ENCODE measurements at regions of chr1 and their contacts with region 1.

Region 1: GRCh38 chr1:211323156-211324063 is 3.2 kb upstream of the TRAF5 start:
- DNase-seq: peak; percentile 77
- H3K4me3 Mint-ChIP-seq: no peak overlapping the region
- H3K27ac Mint-ChIP-seq: no peak overlapping the region
- H3K4me1 Mint-ChIP-seq: peaks cover 52% of the 10 kb centered on the region
- H3K27me3 Mint-ChIP-seq: no peaks in the 10 kb centered on the region

Region 2: DNA sequence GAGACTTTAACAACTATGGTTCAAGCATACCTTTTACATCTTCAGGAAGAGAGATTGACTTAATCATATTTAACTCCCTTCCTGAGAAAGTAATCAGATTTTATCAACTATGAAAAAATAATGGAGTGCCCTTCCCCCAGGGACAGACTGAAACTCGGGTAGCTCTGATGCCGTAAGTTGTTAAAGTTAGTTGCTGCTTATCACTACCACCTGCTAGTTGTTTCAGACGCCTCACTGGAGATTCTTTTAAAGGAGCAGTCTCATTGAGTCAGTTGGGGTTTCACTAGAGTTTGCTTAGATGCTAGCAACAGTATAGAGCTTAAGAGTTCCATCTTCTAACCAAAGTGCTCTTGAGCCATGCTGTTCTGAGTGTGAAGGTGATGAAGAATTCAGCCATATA is 13.8 kb before region 1 on chr1:
- CTCF ChIA-PET with region 1: interaction called, 10 read pairs
- POLR2A ChIA-PET with region 1: interaction called, 3 read pairs
- DNase-seq: no peak
- H3K4me3 Mint-ChIP-seq: no peak overlapping the region
- H3K27ac Mint-ChIP-seq: no peak overlapping the region
- H3K4me1 Mint-ChIP-seq: peaks cover 14% of the 10 kb centered on the region
- H3K27me3 Mint-ChIP-seq: no peaks in the 10 kb centered on the region

Region 3: GRCh38 chr1:211335522-211336157 is 12.2 kb after region 1 on chr1:
- CTCF ChIA-PET with region 1: interaction called, 22 read pairs
- POLR2A ChIA-PET with region 1: interaction called, 60 read pairs
- DNase-seq: peak; percentile 45
- H3K4me3 Mint-ChIP-seq: peak overlapping the region; percentile 58
- H3K27ac Mint-ChIP-seq: peak overlapping the region; percentile 85
- H3K4me1 Mint-ChIP-seq: peaks cover 86% of the 10 kb centered on the region
- H3K27me3 Mint-ChIP-seq: no peaks in the 10 kb centered on the region

Region 4: DNA sequence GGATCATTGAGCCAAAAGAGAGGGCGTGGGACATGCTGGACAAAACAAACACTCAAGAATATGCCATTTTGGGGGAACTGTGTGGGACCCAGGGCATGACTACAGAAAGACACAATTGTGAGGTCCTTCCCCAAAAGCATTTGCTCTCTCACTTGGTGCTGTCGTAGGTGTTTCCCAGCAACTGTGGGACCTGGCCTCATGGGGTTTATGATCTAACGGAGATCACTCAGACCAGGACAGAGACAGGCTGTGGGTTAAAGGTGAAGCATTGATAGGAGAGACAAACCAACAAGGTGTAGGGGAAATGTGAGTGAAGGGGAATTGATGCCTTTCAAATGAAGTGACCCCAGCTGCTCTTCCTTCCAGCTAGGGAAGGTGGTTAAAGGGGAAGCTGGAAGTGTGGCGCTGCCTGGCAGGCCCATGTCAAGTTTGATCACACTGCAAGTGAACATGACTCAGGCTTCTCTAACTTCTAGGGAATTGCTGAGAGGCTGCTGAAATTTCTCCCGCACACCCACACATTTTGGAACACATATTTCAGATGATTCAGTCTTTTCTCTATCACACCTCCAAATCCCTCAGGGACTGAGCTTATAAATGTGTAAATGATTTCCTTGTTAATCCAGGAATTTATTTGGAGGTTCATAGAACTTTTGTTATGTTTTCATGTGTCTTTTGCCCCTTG is 33.5 kb after region 1 on chr1:
- CTCF ChIA-PET with region 1: interaction called, 14 read pairs
- POLR2A ChIA-PET with region 1: interaction called, 31 read pairs
- DNase-seq: no peak
- H3K4me3 Mint-ChIP-seq: no peak overlapping the region
- H3K27ac Mint-ChIP-seq: no peak overlapping the region
- H3K4me1 Mint-ChIP-seq: peaks cover 49% of the 10 kb centered on the region
- H3K27me3 Mint-ChIP-seq: no peaks in the 10 kb centered on the region

Region 5: GRCh38 chr1:211382714-211383480 is 59.5 kb after region 1 on chr1:
- CTCF ChIA-PET with region 1: interaction called, 14 read pairs
- POLR2A ChIA-PET with region 1: interaction called, 15 read pairs
- DNase-seq: peak; percentile 87
- H3K4me3 Mint-ChIP-seq: peak overlapping the region; percentile 83
- H3K27ac Mint-ChIP-seq: peak overlapping the region; percentile 88
- H3K4me1 Mint-ChIP-seq: peaks cover 46% of the 10 kb centered on the region
- H3K27me3 Mint-ChIP-seq: no peaks in the 10 kb centered on the region

Region 6: DNA sequence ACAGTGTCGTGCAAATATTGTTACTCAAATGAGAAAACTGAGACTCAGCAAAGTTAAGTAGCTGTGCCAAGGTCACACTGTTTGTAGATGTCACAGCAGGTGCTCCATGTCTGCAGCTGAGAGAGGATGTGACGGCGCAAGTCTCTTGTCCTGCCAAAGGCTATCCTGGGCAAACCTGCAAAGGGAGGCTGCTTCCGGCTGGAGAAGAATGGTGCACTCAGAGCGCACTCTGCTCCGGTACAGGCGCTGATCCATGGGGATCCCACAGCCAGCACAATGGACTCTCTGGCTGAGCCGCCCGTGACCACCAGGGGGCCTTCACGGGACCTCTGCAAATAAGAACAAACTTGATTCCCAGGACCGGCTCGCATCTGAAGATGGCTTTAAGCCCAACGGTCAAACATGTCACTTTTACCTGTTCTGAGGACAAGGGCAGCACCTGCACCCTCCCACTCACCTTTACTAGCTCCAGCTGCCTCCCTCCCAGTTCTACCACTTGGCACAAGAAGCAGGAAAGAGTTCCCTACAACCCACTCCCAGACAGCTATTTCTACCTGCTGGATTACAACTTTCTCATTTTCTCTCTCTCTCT is 146.6 kb after region 1 on chr1:
- CTCF ChIA-PET with region 1: interaction called, 14 read pairs
- POLR2A ChIA-PET with region 1: interaction called, 3 read pairs
- DNase-seq: peak; percentile 38
- H3K4me3 Mint-ChIP-seq: no peak overlapping the region
- H3K27ac Mint-ChIP-seq: no peak overlapping the region
- H3K4me1 Mint-ChIP-seq: peaks cover 5% of the 10 kb centered on the region
- H3K27me3 Mint-ChIP-seq: peaks cover 10% of the 10 kb centered on the region

Region 7: DNA sequence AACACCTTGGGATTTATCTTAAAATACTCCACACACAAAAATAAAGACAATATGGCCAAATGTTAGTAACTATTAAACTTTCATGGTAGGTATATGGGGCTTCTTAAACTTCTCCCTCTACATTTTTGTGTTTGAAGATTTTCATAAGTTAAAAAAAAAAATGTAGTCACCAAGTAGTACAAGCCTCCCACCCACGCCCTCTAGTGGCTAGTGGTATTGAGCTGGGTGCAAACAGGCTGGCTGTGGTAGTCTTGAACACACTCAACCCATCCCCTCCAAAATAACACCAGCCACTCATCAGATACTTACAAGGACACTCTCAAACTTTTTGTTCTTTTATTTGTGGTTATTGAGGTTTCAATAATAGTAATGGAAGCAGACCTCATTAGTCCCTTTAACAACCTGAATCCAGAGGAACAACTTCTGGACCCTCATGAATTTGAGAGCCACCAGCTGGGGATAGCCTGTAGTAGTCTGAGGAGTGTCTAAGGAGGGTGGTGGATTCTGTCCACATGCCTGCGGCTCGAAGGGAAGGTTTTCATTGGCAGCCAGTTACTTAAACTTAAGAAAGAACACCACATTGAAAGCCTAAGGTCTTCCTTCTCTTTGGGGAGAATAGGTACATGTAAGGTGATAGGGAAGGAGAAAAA is 152.9 kb after region 1 on chr1:
- CTCF ChIA-PET with region 1: interaction called, 39 read pairs
- POLR2A ChIA-PET with region 1: interaction called, 4 read pairs
- DNase-seq: peak; percentile 82
- H3K4me3 Mint-ChIP-seq: no peak overlapping the region
- H3K27ac Mint-ChIP-seq: no peak overlapping the region
- H3K4me1 Mint-ChIP-seq: peaks cover 8% of the 10 kb centered on the region
- H3K27me3 Mint-ChIP-seq: peaks cover 11% of the 10 kb centered on the region

Measured in activated CD4-positive, alpha-beta memory T cell treated with anti-CD3 and anti-CD28 coated beads, Interleukin-2, amount 10 ng/mL, durations not matched to agents 7 days and 5 days (primary cell).